ENCODE measurements at regions of chr9 and their contacts with region 1.

Region 1: GRCh38 chr9:127869310-127870152 is 7.9 kb downstream of the AK1 start:
- DNase-seq: peak; percentile 90 to 92
- H3K4me3 ChIP-seq: no peak overlapping the region
- H3K27ac ChIP-seq: peak overlapping the region; percentile 16 to 60
- H3K4me1 ChIP-seq: peaks cover 0 to 9% of the 10 kb centered on the region in 2 donors
- H3K27me3 ChIP-seq: no peaks in the 10 kb centered on the region
- CTCF ChIP-seq: peak; percentile 82 to 99 (median 90)
- POLR2A ChIP-seq: no peak

Region 2: GRCh38 chr9:127038531-127038930 is 831.0 kb before region 1 on chr9:
- intact Hi-C with region 1: no loop called
- DNase-seq: no peak
- H3K4me3 ChIP-seq: no peak overlapping the region
- H3K27ac ChIP-seq: no peak overlapping the region
- H3K4me1 ChIP-seq: no peaks in the 10 kb centered on the region
- H3K27me3 ChIP-seq: no peaks in the 10 kb centered on the region
- CTCF ChIP-seq: no peak
- POLR2A ChIP-seq: no peak

Region 3: GRCh38 chr9:127545196-127546124 is 324.1 kb before region 1 on chr9:
- intact Hi-C with region 1: no loop called
- DNase-seq: no peak
- H3K4me3 ChIP-seq: no peak overlapping the region
- H3K27ac ChIP-seq: peak overlapping the region; percentile 70 to 84
- H3K4me1 ChIP-seq: peaks cover 0 to 27% of the 10 kb centered on the region in 2 donors
- H3K27me3 ChIP-seq: no peaks in the 10 kb centered on the region
- CTCF ChIP-seq: peak in 1 of 4 experiments; percentile 4
- POLR2A ChIP-seq: no peak

Region 4: GRCh38 chr9:127734747-127735529 is 134.6 kb before region 1 on chr9 and contains the start of gene TOR2A:
- intact Hi-C with region 1: loop called (anchors 5 kb)
- DNase-seq: peak; percentile 97 to 98
- H3K4me3 ChIP-seq: peak within 1 kb of the TSS; percentile 54 to 72
- H3K27ac ChIP-seq: peak within 1 kb of the TSS; percentile 92 to 96
- H3K4me1 ChIP-seq: no peaks in the 10 kb centered on the region
- H3K27me3 ChIP-seq: no peaks in the 10 kb centered on the region
- CTCF ChIP-seq: peak; percentile 88 to 100 (median 96)
- POLR2A ChIP-seq: peak; percentile 79 to 94
- total RNA-seq, gene TOR2A: 2.0 to 73.8 (median 7.0) TPM

Region 5: GRCh38 chr9:127785023-127785932 is 84.3 kb before region 1 on chr9:
- intact Hi-C with region 1: no loop called
- DNase-seq: peak; percentile 89 to 92
- H3K4me3 ChIP-seq: peak overlapping the region; percentile 89 to 93
- H3K27ac ChIP-seq: peak overlapping the region; percentile 96 to 99
- H3K4me1 ChIP-seq: peaks cover 0 to 11% of the 10 kb centered on the region in 2 donors
- H3K27me3 ChIP-seq: no peaks in the 10 kb centered on the region
- CTCF ChIP-seq: peak; percentile 89 to 97 (median 93)
- POLR2A ChIP-seq: no peak

Region 6: GRCh38 chr9:128162215-128163026 is 292.9 kb after region 1 on chr9:
- intact Hi-C with region 1: no loop called
- DNase-seq: peak in 1 of 2 donors; percentile 43
- H3K4me3 ChIP-seq: no peak overlapping the region
- H3K27ac ChIP-seq: no peak overlapping the region
- H3K4me1 ChIP-seq: no peaks in the 10 kb centered on the region
- H3K27me3 ChIP-seq: no peaks in the 10 kb centered on the region
- CTCF ChIP-seq: no peak
- POLR2A ChIP-seq: no peak